ENCODE measurements at regions of chr16 and their contacts with region 1.

Region 1: DNA sequence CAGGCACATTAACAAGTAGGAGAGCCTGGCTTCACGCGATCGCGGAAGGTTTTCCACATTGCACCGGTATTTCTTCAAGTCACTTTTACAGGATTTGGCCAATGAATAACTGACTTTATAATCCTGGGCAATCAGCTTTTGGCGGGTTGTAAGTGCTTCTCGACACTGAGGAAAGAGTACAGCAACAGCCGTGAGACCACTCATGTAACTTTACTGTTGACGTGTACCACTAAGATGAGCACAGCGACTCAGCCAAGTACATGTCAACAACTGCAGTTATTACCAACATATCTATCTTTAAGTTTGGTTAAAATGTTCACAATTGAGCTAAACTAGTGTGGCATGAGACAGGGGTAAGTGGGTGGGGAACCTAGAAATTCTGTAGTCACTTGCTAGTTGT is 71.7 kb upstream of the CLEC18B start:
- DNase-seq: no peak
- H3K4me3 Mint-ChIP-seq: no peak overlapping the region
- H3K27ac Mint-ChIP-seq: no peak overlapping the region
- H3K4me1 Mint-ChIP-seq: peaks cover 5% of the 10 kb centered on the region
- H3K27me3 Mint-ChIP-seq: no peaks in the 10 kb centered on the region

Region 2: GRCh38 chr16:74438492-74439041 is 54.4 kb before region 1 on chr16:
- intact Hi-C with region 1: loop called (anchors 1 kb)
- DNase-seq: peak; percentile 8
- H3K4me3 Mint-ChIP-seq: peak overlapping the region; percentile 58
- H3K27ac Mint-ChIP-seq: peak overlapping the region; percentile 70
- H3K4me1 Mint-ChIP-seq: peaks cover 18% of the 10 kb centered on the region
- H3K27me3 Mint-ChIP-seq: no peaks in the 10 kb centered on the region

Measured in activated T-helper 1 cell treated with anti-CD3 and anti-CD28 coated beads, Interleukin-12 subunit alpha, Interleukin-12 subunit beta, Interleukin-2, Interleukin-4 antibody, amounts not matched to agents 30 ng/mL and 10 ng/mL and 1 ng/mL, durations not matched to agents 14 hours and 24 hours and 36 hours (primary cell).